Gastrocnemius medialis (tissue), 4 donors: ENCODE measurements at regions of chr9 and their contacts with region 1.

Region 1: GRCh38 chr9:136790927-136791641 is at the start of gene TMEM141:
- DNase-seq: peak; percentile 100
- ATAC-seq: peak; percentile 87 to 91
- H3K4me3 ChIP-seq: peak within 1 kb of the TSS; percentile 66 to 92 (median 81)
- H3K27ac ChIP-seq: peak within 1 kb of the TSS; percentile 94 to 99 (median 95)
- H3K4me1 ChIP-seq: peaks cover 12 to 18% of the 10 kb centered on the region in 2 donors
- H3K27me3 ChIP-seq: no peaks in the 10 kb centered on the region
- CTCF ChIP-seq: no peak
- POLR2A ChIP-seq: peak; percentile 60 to 82
- total RNA-seq, gene TMEM141: 46.9 to 70.2 (median 51.1) TPM

Region 2: DNA sequence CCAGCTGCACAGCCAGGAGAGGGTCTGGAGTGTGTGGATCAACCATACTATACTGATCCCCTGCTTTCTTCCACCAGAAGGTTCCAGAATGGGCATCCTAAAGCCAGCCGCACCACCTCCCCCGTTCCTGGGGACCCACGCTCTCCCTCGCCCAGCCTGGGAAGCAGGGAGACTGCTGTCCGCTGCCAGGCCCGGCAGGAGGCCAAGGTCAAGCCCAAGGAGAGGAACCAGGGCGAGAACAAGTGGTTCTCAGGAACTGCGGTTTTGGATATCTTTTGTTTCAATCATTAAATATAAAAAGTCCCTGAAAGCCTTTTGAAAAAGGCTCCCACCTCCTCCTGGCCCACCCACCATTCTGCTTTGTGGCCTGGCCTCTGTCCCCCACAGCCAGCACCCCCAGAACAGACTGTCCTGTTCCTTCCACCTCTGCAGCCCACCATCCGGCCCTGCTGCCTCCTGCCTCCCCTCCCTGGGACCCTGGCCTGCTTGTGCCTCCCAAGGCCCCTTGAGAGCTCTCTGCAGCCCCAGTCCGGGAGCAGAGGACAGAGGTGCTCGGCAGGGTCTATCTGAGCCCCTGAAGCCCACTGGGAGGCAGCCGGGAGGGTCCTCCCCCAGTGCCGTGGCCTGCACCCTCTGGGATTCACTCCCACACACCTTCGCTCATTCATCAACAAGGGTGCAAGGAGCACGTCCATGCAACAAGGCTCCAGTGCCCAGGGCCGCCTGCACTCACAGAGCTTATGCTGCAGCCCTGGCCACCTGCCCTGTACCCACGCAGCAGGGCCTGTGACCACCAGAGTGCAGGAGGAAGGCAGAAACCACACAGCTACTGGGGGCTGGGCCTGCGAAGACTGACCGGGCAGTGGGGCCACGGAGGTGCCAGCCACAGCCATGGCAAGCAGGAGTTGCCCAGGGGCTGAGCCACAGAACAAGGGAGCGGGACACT is 42.1 kb before region 1 on chr9:
- in situ Hi-C with region 1: no loop called
- intact Hi-C with region 1: no loop called
- DNase-seq: no peak
- ATAC-seq: peak in 1 of 2 donors; percentile 20
- H3K4me3 ChIP-seq: no peak overlapping the region
- H3K27ac ChIP-seq: peak overlapping the region in 3 of 4 donors; percentile 51 to 55 (median 52)
- H3K4me1 ChIP-seq: peaks cover 0 to 3% of the 10 kb centered on the region in 2 donors
- H3K27me3 ChIP-seq: peaks cover 0 to under 1% (median 0%) of the 10 kb centered on the region in 3 donors
- CTCF ChIP-seq: no peak
- POLR2A ChIP-seq: no peak

Region 3: DNA sequence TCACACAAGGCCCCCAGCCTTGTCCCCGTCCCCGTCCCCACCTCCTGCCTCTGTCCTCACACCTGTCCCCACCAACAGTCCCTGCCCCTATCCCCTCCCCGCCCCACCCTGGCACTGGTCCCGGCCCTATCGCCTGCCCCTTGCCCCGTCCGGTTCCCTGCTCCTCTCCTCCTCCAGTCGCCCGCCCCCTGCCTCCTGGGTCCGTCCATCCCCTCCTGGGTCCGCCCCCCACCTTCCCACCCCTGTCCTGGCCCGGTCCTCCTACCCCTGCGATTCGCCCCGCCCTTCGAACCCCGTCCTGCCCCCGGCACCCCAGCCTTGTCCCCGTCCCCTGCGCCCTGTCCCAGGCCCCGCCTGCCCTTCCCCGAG is 74.6 kb after region 1 on chr9:
- in situ Hi-C with region 1: no loop called
- intact Hi-C with region 1: loop called (anchors 5 kb)
- DNase-seq: no peak
- ATAC-seq: peak; percentile 4 to 31
- H3K4me3 ChIP-seq: peak overlapping the region; percentile 87 to 100 (median 94)
- H3K27ac ChIP-seq: peak overlapping the region; percentile 88 to 100 (median 97)
- H3K4me1 ChIP-seq: peaks cover 21 to 27% of the 10 kb centered on the region in 2 donors
- H3K27me3 ChIP-seq: no peaks in the 10 kb centered on the region
- CTCF ChIP-seq: no peak
- POLR2A ChIP-seq: no peak

Region 4: DNA sequence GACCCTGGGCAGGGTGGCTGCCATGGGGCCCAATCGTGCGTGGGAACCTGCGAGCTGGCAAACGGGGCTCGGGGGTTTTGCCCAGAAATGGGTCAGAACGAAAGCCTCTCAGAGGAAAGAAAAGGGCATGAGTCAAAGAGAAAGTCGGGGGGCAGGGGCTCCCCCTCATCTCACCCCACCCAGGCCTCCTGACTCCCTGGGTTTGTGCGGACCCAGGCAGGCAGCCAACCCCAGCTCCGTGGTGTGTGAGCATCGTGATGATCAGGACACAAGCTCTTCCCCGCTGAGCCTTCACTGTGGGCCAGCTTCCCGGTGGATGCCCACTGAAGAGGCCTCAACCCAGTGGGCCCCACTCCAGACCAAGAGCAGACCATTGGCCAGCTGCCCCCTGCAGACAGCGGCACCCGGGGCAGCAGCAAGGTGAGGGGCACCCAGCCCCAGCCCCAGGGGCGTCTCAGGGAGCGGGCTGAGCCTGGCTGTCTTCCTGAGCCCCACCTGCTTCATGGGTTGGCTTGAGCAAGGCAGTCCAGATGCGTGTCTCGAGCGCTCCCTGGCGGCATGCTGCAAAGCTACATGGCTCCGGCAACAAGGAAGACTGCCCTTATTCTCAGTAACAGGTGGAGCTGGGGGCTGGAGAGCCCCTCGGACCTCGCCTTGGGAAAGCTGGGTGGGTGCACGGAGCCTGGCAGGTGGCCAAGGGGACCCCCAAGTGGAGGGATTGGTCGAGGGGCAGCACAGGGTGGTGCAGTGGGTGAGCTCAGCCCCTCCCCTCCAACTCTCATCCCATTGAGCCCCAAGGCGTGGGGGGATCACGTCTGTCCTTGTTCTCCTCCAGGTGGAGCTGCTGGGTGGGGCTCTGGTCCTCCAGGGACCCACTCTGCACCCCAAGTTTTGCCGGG is 244.0 kb after region 1 on chr9:
- in situ Hi-C with region 1: loop called (anchors 5 to 10 kb)
- intact Hi-C with region 1: loop called (anchors 1 kb)
- DNase-seq: peak; percentile 55 to 66
- ATAC-seq: peak; percentile 73 to 93
- H3K4me3 ChIP-seq: no peak overlapping the region
- H3K27ac ChIP-seq: no peak overlapping the region
- H3K4me1 ChIP-seq: peaks cover 0 to 3% of the 10 kb centered on the region in 2 donors
- H3K27me3 ChIP-seq: peaks cover 0 to 6% (median 0%) of the 10 kb centered on the region in 3 donors
- CTCF ChIP-seq: peak; percentile 81 to 96 (median 91)
- POLR2A ChIP-seq: no peak